ENCODE measurements at regions of chr9 and their contacts with region 1.

Region 1: DNA sequence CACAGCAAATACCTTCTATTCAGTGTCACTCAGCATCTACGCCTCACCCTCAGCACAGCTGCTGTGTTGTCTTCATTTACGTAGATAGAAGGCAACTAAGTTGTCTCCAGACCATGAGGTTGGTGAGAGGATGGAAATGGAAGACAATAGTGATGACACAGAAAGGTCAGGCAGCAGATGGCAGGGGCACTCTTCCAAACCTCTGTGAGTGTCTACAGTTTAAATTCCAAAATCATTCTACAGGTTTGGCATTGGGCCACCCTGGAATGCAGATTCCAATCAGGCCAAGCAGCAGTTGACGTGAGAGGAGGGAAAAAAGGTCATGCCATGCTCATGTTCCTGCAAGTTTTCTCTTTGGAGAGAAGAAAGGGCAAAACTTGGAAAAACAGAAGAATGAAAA is 68.7 kb upstream of the ADAMTSL1 start:
- DNase-seq: peak; percentile 61
- H3K4me3 Mint-ChIP-seq: no peak overlapping the region
- H3K27ac Mint-ChIP-seq: no peak overlapping the region
- H3K4me1 Mint-ChIP-seq: peaks cover 15% of the 10 kb centered on the region
- H3K27me3 Mint-ChIP-seq: no peaks in the 10 kb centered on the region
- CTCF ChIP-seq: peak; percentile 13

Region 2: DNA sequence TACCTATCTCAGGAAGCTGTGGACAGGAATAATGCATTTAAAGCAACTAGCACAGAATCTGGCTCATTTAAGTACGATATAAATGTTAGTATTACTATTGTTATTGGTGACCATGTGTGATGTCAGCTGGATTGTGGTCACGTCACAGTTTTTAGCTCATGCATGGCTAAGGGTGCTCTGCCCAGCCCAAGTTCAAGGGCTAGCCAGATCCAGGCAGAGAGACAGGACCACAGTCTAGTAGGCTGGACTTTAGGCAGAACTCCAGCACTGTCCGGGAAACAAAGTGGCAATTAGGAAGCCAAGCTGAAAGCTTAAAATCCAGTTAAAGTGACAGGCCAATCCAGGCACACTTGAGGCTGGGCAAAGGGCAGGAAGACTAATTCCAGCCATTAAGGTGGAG is 342.4 kb after region 1 on chr9:
- CTCF ChIA-PET with region 1: no interaction called
- POLR2A ChIA-PET with region 1: no interaction called
- intact Hi-C with region 1: no loop called
- DNase-seq: no peak
- H3K4me3 Mint-ChIP-seq: no peak overlapping the region
- H3K27ac Mint-ChIP-seq: no peak overlapping the region
- H3K4me1 Mint-ChIP-seq: no peaks in the 10 kb centered on the region
- H3K27me3 Mint-ChIP-seq: no peaks in the 10 kb centered on the region
- CTCF ChIP-seq: no peak

Region 3: GRCh38 chr9:18824095-18824666 is 418.9 kb after region 1 on chr9:
- CTCF ChIA-PET with region 1: interaction called, 3 read pairs
- POLR2A ChIA-PET with region 1: no interaction called
- intact Hi-C with region 1: loop called (anchors 5 kb)
- DNase-seq: peak; percentile 45
- H3K4me3 Mint-ChIP-seq: no peak overlapping the region
- H3K27ac Mint-ChIP-seq: no peak overlapping the region
- H3K4me1 Mint-ChIP-seq: no peaks in the 10 kb centered on the region
- H3K27me3 Mint-ChIP-seq: no peaks in the 10 kb centered on the region
- CTCF ChIP-seq: peak; percentile 47